CD4-positive, alpha-beta memory T cell (primary cell): ENCODE measurements at regions of chr21 and their contacts with region 1.

Region 1: GRCh38 chr21:28737674-28738419 is 254.8 kb downstream of the LTN1 start:
- DNase-seq: no peak
- H3K4me3 ChIP-seq: no peak overlapping the region
- H3K4me3 Mint-ChIP-seq: peak overlapping the region in 1 of 8 donors; percentile 17
- H3K27ac ChIP-seq: no peak overlapping the region
- H3K27ac Mint-ChIP-seq: peak overlapping the region in 2 of 7 donors; percentile 14 to 42
- H3K4me1 ChIP-seq: peaks cover 7% of the 10 kb centered on the region
- H3K4me1 Mint-ChIP-seq: peaks cover 3 to 12% (median 6%) of the 10 kb centered on the region in 4 donors
- H3K27me3 ChIP-seq: no peaks in the 10 kb centered on the region
- H3K27me3 Mint-ChIP-seq: no peaks in the 10 kb centered on the region

Region 2: GRCh38 chr21:28516991-28517592 is 220.8 kb before region 1 on chr21:
- CTCF ChIA-PET with region 1: interaction called, 174 read pairs
- POLR2A ChIA-PET with region 1: no interaction called
- intact Hi-C with region 1: no loop called
- DNase-seq: peak; percentile 53 to 57 (median 55)
- H3K4me3 ChIP-seq: no peak overlapping the region
- H3K4me3 Mint-ChIP-seq: no peak overlapping the region
- H3K27ac ChIP-seq: no peak overlapping the region
- H3K27ac Mint-ChIP-seq: no peak overlapping the region
- H3K4me1 ChIP-seq: no peaks in the 10 kb centered on the region
- H3K4me1 Mint-ChIP-seq: peaks cover 0 to 6% (median under 1%) of the 10 kb centered on the region in 4 donors
- H3K27me3 ChIP-seq: no peaks in the 10 kb centered on the region
- H3K27me3 Mint-ChIP-seq: peaks cover 0 to 1% of the 10 kb centered on the region in 2 donors